Activated CD8-positive, alpha-beta T cell treated with anti-CD3 and anti-CD28 coated beads, Interleukin-2, amount 10 ng/mL, durations not matched to agents 7 days and 5 days (primary cell): ENCODE measurements at regions of chr17 and their contacts with region 1.

Region 1: DNA sequence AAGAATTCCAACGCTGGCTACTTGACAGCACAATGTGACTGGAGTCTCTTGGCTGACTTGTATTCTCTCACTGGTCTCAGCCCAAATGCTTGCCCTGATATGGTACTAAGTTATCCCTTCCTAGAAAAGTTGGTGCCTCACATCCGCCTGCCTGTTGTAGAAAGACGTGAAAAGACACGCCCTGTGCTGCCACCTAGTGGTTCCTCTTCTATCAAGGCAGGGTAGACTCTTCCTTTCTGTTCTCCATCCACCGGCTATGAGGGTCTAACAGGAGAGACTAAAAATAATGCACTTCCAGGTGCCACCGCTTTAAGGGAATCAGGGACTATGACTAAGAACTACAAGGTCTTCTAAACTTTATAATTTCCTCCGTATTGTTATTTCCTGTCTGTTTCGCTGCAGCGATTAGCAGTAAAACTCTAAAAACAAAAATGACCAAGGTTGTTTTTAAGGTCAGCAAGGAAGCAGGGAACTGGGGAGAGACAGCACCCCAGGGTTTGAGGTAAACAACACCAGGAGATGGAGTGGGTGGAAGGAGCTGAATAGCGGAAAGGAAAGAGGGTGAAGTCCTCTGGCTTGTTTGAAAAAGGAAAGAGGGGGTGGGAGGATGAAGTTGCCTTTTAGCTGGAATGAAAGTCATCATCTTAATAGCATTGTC is 109.5 kb downstream of the YPEL2 start:
- DNase-seq: peak; percentile 96
- ATAC-seq: peak; percentile 99
- H3K4me3 Mint-ChIP-seq: peak overlapping the region; percentile 35
- H3K27ac Mint-ChIP-seq: peak overlapping the region; percentile 89
- H3K4me1 Mint-ChIP-seq: peaks cover 46% of the 10 kb centered on the region
- H3K27me3 Mint-ChIP-seq: no peaks in the 10 kb centered on the region

Region 2: GRCh38 chr17:59254737-59255136 is 186.2 kb before region 1 on chr17:
- CTCF ChIA-PET with region 1: no interaction called
- POLR2A ChIA-PET with region 1: no interaction called
- DNase-seq: no peak
- ATAC-seq: no peak
- H3K4me3 Mint-ChIP-seq: no peak overlapping the region
- H3K27ac Mint-ChIP-seq: no peak overlapping the region
- H3K4me1 Mint-ChIP-seq: no peaks in the 10 kb centered on the region
- H3K27me3 Mint-ChIP-seq: no peaks in the 10 kb centered on the region

Region 3: GRCh38 chr17:59289626-59290301 is 151.1 kb before region 1 on chr17:
- CTCF ChIA-PET with region 1: no interaction called
- POLR2A ChIA-PET with region 1: no interaction called
- DNase-seq: no peak
- ATAC-seq: no peak
- H3K4me3 Mint-ChIP-seq: no peak overlapping the region
- H3K27ac Mint-ChIP-seq: no peak overlapping the region
- H3K4me1 Mint-ChIP-seq: no peaks in the 10 kb centered on the region
- H3K27me3 Mint-ChIP-seq: no peaks in the 10 kb centered on the region

Region 4: DNA sequence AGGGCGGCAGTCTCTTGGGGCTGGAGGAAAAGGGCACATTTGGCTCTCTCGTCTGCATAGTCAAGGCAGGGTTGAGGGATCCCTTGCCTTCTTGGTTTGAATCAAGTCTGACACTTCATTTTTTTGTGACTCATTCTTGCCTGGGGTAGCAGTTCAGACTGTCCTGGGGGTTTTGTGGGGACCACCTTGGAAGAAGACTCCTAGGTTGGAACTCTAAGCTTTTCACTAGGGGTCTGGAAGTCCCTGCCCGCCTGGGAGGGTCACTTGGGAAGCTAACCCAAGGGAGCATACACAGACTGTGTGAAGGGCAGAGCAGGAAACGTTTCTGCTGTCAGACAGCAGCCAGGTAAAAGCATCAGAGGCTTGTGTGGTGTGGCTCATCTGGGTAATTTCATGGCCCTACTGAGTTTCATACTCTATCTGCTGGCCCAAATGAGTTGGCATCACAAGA is 98.2 kb before region 1 on chr17:
- CTCF ChIA-PET with region 1: interaction called, 10 read pairs
- POLR2A ChIA-PET with region 1: no interaction called
- DNase-seq: no peak
- ATAC-seq: peak; percentile 68
- H3K4me3 Mint-ChIP-seq: no peak overlapping the region
- H3K27ac Mint-ChIP-seq: peak overlapping the region; percentile 70
- H3K4me1 Mint-ChIP-seq: peaks cover 29% of the 10 kb centered on the region
- H3K27me3 Mint-ChIP-seq: no peaks in the 10 kb centered on the region

Region 5: DNA sequence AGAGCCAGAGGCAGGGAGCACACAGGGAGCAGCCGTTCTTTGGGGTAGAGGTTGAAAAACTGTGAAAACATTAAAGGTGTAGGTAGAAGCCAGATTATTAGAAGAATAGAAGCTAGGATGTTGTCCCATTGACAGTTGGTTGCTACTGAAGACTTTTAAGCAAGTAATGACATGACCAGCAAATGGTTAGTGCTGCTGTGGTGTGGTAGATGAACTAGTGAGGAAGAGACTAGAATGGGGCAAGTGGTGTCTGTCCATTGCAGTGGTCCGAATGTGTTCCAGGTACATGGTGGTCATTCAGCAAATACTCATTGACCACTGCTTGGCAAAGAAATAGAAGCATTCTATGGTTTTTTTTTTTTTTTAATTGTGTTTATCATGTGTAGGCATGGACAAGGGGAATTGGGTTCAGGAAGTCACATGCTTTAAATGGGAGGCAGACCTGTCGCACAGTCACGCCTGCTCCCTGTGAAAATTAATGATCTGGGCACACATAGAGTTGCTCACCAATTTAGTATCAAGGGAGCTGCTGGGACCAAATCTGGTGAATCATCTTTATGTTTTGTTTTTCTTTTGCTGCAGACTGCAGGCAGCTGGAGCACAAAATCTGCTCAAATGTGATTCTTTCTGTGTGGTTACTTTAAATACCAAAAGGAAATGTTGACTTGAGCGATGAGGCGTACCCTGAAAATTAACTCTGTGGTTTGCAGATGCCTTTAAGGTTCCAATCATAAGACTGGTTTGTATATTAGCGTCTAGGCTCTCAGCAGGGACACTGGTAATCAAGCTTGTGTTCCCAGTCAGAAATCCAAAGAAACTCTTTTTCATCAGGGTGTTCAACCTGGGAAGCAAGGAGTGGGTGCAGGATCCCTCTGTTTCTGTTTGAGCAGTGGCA is 78.8 kb before region 1 on chr17:
- CTCF ChIA-PET with region 1: interaction called, 21 read pairs
- POLR2A ChIA-PET with region 1: interaction called, 5 read pairs
- DNase-seq: peak; percentile 67
- ATAC-seq: peak; percentile 48
- H3K4me3 Mint-ChIP-seq: peak overlapping the region; percentile 69
- H3K27ac Mint-ChIP-seq: peak overlapping the region; percentile 89
- H3K4me1 Mint-ChIP-seq: peaks cover 88% of the 10 kb centered on the region
- H3K27me3 Mint-ChIP-seq: no peaks in the 10 kb centered on the region

Region 6: GRCh38 chr17:59427425-59427921 is 13.4 kb before region 1 on chr17:
- CTCF ChIA-PET with region 1: interaction called, 28 read pairs
- POLR2A ChIA-PET with region 1: no interaction called
- DNase-seq: peak; percentile 33
- ATAC-seq: no peak
- H3K4me3 Mint-ChIP-seq: no peak overlapping the region
- H3K27ac Mint-ChIP-seq: peak overlapping the region; percentile 0
- H3K4me1 Mint-ChIP-seq: peaks cover 22% of the 10 kb centered on the region
- H3K27me3 Mint-ChIP-seq: no peaks in the 10 kb centered on the region

Region 7: DNA sequence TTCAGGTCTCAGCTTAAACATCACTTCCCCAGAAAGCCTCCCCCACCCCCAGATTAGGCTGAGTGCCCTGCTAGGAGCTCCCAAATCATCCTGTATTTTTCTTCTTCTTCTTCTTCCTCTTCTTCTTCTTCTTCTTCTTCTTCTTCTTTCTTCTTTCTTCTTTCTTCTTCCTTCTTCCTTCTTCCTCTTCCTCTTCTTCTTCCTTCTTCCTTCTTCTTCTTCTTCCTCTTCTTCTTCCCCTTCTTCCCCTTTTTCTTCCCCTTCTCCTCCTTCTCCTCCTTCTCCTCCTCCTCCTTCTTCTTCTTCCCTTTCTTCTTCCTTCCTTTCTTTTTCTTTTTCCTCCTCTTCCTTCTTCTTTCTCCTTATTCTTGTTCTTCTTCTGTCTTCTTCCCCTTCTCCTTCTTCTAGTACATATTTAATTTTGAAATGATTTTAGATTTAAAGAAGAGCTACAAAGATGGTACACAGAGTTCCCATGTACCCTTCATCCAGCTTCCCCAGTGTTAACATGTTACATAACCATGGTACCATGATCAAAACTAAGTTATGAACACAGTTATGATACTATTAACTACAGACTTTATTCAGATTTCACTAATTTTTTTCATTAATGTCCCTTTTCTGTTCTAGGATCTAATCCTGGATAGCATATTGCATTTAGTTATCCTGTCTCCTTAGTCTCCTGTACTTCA is 97.5 kb after region 1 on chr17:
- CTCF ChIA-PET with region 1: no interaction called
- POLR2A ChIA-PET with region 1: no interaction called
- DNase-seq: no peak
- ATAC-seq: no peak
- H3K4me3 Mint-ChIP-seq: no peak overlapping the region
- H3K27ac Mint-ChIP-seq: no peak overlapping the region
- H3K4me1 Mint-ChIP-seq: no peaks in the 10 kb centered on the region
- H3K27me3 Mint-ChIP-seq: peaks cover 24% of the 10 kb centered on the region